CD4-positive, alpha-beta memory T cell (primary cell): ENCODE measurements at regions of chr7 and their contacts with region 1.

Region 1: GRCh38 chr7:149422129-149422913 is 38.5 kb downstream of the ZNF777 start:
- DNase-seq: peak; percentile 54 to 82 (median 77)
- H3K4me3 ChIP-seq: peak overlapping the region; percentile 47 to 60
- H3K4me3 Mint-ChIP-seq: peak overlapping the region; percentile 70 to 83 (median 72)
- H3K27ac ChIP-seq: peak overlapping the region; percentile 54
- H3K27ac Mint-ChIP-seq: peak overlapping the region; percentile 25 to 90 (median 65)
- H3K4me1 ChIP-seq: peaks cover 6% of the 10 kb centered on the region
- H3K4me1 Mint-ChIP-seq: peaks cover 0 to 13% (median 8%) of the 10 kb centered on the region in 4 donors
- H3K27me3 ChIP-seq: no peaks in the 10 kb centered on the region
- H3K27me3 Mint-ChIP-seq: no peaks in the 10 kb centered on the region

Region 2: GRCh38 chr7:149147072-149147751 is 275.1 kb before region 1 on chr7 and contains the start of gene ZNF398:
- CTCF ChIA-PET with region 1: no interaction called
- POLR2A ChIA-PET with region 1: interaction called, 12 read pairs
- intact Hi-C with region 1: loop called (anchors 1 kb)
- DNase-seq: peak; percentile 83 to 89 (median 85)
- H3K4me3 ChIP-seq: peak within 1 kb of the TSS; percentile 71 to 74
- H3K4me3 Mint-ChIP-seq: peak within 1 kb of the TSS; percentile 85 to 95 (median 92)
- H3K27ac ChIP-seq: peak within 1 kb of the TSS; percentile 86
- H3K27ac Mint-ChIP-seq: peak within 1 kb of the TSS; percentile 87 to 97 (median 96)
- H3K4me1 ChIP-seq: peaks cover 35% of the 10 kb centered on the region
- H3K4me1 Mint-ChIP-seq: peaks cover 18 to 46% (median 32%) of the 10 kb centered on the region in 4 donors
- H3K27me3 ChIP-seq: no peaks in the 10 kb centered on the region
- H3K27me3 Mint-ChIP-seq: no peaks in the 10 kb centered on the region
- total RNA-seq, gene ZNF398: 26.9 to 28.4 TPM

Region 3: DNA sequence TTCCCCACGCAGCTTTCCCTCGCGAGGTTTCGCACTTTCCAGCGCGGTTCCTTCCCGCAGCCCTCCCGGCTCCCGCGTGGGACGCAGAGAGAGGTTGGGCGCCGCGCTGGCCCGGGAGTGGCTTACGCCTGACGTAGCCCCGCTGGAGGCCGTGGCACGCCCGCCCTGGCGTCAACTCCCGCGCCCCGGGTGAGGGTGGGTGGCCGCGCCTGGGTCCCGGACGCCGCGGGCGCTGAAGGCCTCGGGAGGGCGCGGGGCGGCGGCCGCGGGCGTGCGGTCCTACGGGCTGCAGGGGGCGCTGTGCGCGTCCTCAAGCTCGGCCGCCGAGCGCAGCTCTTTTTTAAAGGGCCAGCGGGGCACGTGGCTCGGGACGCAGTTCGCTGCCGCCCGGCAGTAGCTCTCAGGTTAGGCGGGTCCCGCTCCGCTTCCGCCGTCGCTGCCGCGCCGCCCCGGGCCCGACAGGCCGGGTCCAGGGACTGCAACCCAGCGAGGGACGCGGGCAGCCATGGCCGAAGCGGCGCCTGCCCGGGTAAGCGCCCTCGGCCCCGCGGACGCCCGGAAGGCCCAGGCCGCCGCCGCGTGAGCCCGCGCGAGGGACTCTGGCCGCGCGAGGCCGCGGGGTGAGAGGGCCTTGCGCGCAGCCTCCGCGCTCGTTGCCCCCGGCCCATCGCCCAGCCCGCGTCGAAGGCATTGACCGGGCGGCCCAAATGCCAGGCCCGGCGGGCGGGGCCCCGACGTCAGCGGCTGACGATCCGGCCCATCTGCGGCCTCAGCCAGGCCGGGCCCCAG is 160.3 kb before region 1 on chr7 and contains the start of gene ZNF783:
- CTCF ChIA-PET with region 1: interaction called, 15 read pairs
- POLR2A ChIA-PET with region 1: interaction called, 15 read pairs
- intact Hi-C with region 1: loop called (anchors 1 kb)
- DNase-seq: peak; percentile 84 to 89 (median 87)
- H3K4me3 ChIP-seq: peak within 1 kb of the TSS; percentile 52 to 61
- H3K4me3 Mint-ChIP-seq: peak within 1 kb of the TSS; percentile 84 to 92 (median 87)
- H3K27ac ChIP-seq: peak within 1 kb of the TSS; percentile 68
- H3K27ac Mint-ChIP-seq: peak within 1 kb of the TSS; percentile 87 to 95 (median 92)
- H3K4me1 ChIP-seq: peaks cover 25% of the 10 kb centered on the region
- H3K4me1 Mint-ChIP-seq: peaks cover 13 to 33% (median 21%) of the 10 kb centered on the region in 4 donors
- H3K27me3 ChIP-seq: no peaks in the 10 kb centered on the region
- H3K27me3 Mint-ChIP-seq: no peaks in the 10 kb centered on the region
- total RNA-seq, gene ZNF783: 42.6 to 43.5 TPM

Region 4: GRCh38 chr7:149460493-149461277 is 38.4 kb after region 1 on chr7 and contains the start of gene ZNF777:
- CTCF ChIA-PET with region 1: interaction called, 43 read pairs
- POLR2A ChIA-PET with region 1: interaction called, 41 read pairs
- intact Hi-C with region 1: loop called (anchors 1 kb)
- DNase-seq: peak; percentile 80 to 88 (median 83)
- H3K4me3 ChIP-seq: peak within 1 kb of the TSS; percentile 73 to 74
- H3K4me3 Mint-ChIP-seq: peak within 1 kb of the TSS; percentile 86 to 91 (median 88)
- H3K27ac ChIP-seq: peak within 1 kb of the TSS; percentile 62
- H3K27ac Mint-ChIP-seq: peak within 1 kb of the TSS; percentile 48 to 90 (median 87)
- H3K4me1 ChIP-seq: peaks cover 24% of the 10 kb centered on the region
- H3K4me1 Mint-ChIP-seq: peaks cover 16 to 33% (median 28%) of the 10 kb centered on the region in 4 donors
- H3K27me3 ChIP-seq: peaks cover 6% of the 10 kb centered on the region
- H3K27me3 Mint-ChIP-seq: peaks cover 0 to 3% of the 10 kb centered on the region in 2 donors
- total RNA-seq, gene ZNF777: 15.9 to 16.8 TPM

Region 5: DNA sequence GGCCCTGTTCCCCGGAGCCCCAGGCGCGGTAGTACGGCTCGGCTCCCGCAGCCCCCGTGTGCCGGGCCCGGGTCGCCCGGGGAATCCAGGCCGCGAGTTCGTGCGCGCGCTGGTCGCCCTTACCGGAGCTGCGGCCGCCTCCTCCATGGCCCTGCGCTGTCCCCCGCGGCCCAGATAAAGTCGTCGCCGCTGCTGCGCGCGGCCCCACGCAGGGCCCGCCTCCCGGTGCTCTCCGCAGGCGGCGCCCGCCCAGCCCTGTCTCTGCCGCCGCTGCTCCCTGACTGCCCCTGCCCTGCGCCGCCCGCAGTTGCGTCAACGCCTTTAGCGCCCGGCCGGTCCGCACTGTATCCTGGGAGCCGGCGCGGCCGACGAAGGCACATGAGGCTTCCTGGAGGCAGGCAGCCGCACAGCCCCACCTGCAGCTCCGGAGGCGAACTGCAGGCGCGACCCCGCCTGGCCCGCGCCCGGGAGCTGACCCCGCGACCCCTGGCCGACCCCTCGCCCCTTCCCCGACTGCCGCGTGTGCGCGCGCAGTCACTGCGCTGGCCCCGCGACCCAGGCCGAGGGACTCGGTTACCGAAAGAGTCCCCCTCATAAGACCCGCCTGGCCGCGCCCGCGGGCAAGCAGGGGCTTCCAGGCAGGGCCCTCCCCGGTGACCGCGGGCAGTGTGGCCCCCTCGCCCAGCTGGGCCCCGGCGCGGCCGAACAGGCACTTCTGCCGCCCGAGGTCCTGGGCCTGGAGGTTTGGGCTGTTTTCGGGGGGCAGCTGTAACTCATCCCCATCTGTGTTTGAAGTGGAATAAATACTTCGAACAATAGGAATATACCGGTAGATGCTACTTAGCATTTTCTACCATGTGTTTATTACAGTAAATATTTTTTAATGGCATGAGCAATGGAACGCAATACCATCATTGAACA is 202.4 kb after region 1 on chr7:
- CTCF ChIA-PET with region 1: interaction called, 11 read pairs
- POLR2A ChIA-PET with region 1: interaction called, 10 read pairs
- intact Hi-C with region 1: loop called (anchors 1 kb)
- DNase-seq: peak; percentile 89 to 92 (median 92)
- H3K4me3 ChIP-seq: peak overlapping the region; percentile 72 to 76
- H3K4me3 Mint-ChIP-seq: peak overlapping the region; percentile 85 to 97 (median 92)
- H3K27ac ChIP-seq: peak overlapping the region; percentile 66
- H3K27ac Mint-ChIP-seq: peak overlapping the region; percentile 77 to 96 (median 88)
- H3K4me1 ChIP-seq: peaks cover 41% of the 10 kb centered on the region
- H3K4me1 Mint-ChIP-seq: peaks cover 23 to 54% (median 36%) of the 10 kb centered on the region in 4 donors
- H3K27me3 ChIP-seq: peaks cover 4% of the 10 kb centered on the region
- H3K27me3 Mint-ChIP-seq: peaks cover 5 to 10% of the 10 kb centered on the region in 2 donors

Region 6: DNA sequence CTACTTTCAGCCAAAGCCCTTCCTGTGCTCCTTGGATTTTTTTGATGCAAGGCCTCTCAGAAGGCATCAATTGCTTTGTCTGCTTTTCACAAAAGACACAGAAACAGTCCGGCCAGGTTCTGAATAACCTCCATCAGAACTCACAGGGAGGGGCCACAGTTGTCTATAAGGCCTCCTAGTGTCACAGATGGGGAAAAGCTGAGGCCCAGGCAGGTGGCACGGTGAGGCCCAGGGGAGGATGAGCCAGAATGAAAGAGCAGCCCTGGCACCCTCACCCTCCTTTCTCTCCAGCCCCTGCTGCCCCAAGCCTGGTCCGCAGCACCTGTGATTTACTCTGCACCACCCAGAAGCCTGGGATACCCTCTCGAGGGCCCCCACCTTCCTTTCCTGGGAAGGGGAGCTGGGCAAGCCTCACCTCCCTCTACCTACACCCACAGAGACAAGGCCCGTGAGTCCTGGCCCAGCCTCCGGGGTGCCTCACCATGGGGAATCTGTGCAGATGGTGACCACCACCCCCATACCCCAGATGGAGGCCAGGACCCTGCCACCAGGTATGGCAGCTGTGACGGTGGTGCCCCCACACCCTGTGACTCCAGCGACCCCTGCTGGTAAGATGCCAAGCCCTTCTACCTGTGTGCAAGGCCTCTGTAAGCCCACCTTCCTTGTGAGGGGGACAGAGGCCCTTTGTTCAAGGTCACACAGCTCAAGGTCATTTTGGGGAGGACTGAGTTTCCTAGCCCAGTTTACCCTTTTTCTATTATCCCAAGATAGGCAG is 377.3 kb after region 1 on chr7:
- CTCF ChIA-PET with region 1: no interaction called
- POLR2A ChIA-PET with region 1: no interaction called
- intact Hi-C with region 1: loop called (anchors 2 kb)
- DNase-seq: peak; percentile 43 to 59 (median 56)
- H3K4me3 ChIP-seq: no peak overlapping the region
- H3K4me3 Mint-ChIP-seq: no peak overlapping the region
- H3K27ac ChIP-seq: no peak overlapping the region
- H3K27ac Mint-ChIP-seq: no peak overlapping the region
- H3K4me1 ChIP-seq: no peaks in the 10 kb centered on the region
- H3K4me1 Mint-ChIP-seq: peaks cover 0 to 4% (median 0%) of the 10 kb centered on the region in 4 donors
- H3K27me3 ChIP-seq: no peaks in the 10 kb centered on the region
- H3K27me3 Mint-ChIP-seq: peaks cover 0 to 2% of the 10 kb centered on the region in 2 donors